Right ventricle myocardium superior (tissue), 1 donor: ENCODE measurements at regions of chr11 and their contacts with region 1.

Region 1: DNA sequence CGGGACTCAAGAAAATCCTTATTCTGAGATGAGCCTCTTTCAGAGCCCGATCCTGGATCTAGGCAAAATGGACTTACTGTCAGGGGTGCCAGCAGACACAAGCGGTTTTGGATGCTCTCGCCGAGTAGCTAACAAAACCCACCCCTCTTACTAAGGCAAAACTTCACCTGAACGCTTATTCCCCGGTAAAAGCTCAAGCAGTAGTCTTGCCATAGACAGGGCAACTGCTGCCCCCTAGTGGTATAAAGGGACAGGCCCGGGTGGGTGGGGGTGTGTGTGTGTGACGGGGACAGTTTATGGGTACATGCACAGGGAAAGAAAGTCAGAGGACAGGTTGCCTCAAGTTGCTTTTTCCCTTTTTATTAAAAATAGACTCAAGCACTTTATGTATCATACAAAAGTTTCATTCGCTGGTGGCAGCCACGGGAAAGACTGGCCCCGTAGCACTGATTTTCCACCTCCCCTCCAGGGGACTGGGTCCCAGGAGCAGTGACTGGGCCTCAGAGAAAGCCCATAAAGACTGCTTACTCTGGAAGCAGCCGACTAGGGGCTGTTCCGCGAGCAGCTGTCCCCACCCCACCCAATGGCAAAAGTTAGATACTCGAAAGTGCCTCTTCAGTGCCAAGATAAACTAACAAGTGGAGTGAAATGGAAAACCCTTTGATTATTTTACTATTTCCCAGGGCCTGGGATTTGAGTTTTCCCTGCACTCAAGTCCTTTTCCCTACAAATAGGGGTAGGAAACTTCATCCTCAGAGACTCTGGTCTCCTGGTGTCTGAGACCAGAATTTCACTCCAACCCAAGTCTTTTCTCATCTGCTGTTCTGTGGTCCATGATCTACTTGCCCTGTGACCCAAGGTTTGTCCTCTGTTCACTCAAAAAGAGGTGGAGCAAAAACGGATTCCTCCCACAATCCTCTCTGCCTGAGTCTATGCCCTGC is 4.7 kb downstream of the YPEL4 start:
- DNase-seq: peak; percentile 85
- ATAC-seq: peak; percentile 85

Region 2: GRCh38 chr11:57456960-57457642 is 187.9 kb before region 1 on chr11:
- intact Hi-C with region 1: loop called (anchors 5 kb)
- DNase-seq: peak; percentile 95
- ATAC-seq: peak; percentile 89

Region 3: GRCh38 chr11:57493507-57494503 is 151.2 kb before region 1 on chr11:
- intact Hi-C with region 1: no loop called
- DNase-seq: peak; percentile 74
- ATAC-seq: peak; percentile 85

Region 4: DNA sequence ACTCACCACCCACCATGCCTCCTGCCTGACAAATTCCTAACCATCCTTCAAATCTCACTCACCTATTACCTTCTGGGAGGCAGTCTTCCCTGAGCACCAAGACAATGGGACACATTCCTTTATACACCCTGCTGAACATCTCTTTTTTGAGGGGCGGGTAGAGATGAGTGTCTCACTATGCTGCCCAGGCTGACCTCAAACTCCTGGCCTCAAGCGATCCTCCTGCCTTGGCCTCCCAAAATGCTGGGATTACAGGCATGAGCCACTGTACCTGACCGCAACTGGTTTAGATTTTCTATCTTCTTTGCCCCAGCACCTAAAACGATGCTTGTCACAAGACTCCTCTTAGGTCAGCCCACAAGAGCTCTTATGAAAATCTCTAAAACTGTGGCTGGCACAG is 121.6 kb before region 1 on chr11:
- intact Hi-C with region 1: no loop called
- DNase-seq: no peak
- ATAC-seq: no peak

Region 5: DNA sequence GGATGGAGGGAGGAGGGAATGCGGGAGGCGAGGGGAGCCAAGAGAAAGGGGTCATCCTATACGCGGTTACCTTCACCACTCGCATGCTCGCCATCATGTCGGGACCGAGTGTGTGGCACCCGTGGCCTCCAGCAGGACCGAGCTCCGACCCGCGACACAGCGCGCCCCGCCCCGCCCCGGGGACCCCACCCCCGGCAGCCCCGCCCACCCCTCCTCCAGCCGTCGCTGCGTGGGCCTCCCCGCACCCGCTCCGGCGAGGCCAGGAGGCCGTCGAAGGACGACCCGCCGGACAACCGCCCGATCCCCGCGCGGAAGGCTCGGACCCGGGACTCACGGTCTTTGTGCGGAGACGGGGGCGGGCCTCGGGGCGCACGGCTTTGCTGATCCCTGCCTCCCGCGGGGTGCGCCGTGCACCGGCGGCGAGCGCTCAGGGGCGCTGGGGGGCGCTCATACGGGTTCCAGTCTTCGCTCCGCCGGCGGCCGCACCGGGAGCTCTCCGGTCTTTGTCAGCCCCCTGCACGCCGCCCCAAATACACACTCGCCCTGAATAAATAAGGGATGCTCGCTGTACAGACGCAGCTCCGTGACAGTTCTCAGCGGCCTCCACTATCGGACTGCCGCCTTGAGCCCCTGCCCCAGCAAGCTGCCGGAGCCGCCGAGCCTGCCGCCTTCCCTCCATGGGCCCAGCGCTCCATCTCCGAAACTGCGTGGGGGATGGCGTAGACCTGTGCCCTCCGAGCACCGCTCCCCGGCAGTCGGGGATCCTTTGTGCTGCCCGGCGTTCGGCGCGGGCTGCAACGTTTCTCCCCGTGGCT is 77.3 kb before region 1 on chr11 and contains the start of gene UBE2L6:
- intact Hi-C with region 1: loop called (anchors 2 kb)
- DNase-seq: peak; percentile 91
- ATAC-seq: peak; percentile 87
- total RNA-seq, gene UBE2L6: 15.1 TPM

Region 6: GRCh38 chr11:57727185-57727584 is 82.2 kb after region 1 on chr11:
- intact Hi-C with region 1: no loop called
- DNase-seq: no peak
- ATAC-seq: no peak